Sciatic nerve (tissue), 2 donors: ENCODE measurements at regions of chr11 and their contacts with region 1.

Region 1: DNA sequence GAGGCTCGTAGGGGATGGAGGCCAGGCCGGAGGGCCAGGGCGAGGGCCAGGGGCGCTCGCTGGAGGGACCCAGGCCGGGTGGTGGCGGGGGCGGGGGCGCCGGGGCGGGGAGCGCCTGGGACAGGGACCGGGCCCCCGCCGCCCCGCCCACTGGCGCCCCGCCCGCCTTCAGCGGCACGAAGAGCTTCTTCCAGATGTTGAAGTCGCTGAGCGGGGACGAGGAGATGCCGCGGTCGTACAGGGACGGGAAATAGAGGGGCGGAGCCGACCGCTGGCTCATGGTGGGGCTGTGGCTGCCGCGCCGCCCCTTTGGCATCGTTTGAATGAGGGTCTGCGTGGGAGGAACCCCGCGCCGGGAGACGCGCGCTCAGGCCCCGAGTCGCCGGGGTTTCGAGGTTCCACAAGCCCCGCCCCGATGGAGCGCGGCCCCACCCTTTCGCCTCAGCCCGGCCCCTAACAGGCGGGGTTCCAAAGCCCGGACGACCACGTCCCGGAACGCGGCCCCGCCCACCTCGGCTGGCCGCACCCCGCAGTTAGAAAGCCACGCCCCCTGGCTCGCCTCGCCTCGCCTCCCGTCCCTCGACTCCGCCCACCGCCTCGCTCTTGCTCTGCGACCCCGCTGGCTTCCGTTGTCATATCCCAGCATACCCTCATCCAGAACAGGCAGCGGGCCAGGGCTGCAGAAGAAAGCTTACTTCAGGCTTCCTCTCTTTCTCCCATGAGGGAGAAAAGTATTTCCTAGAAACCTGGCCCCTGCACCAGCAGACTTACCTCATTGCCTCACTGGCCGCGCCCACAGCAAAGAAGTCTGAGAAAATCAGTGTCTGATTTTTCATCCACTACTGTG is at the start of gene C11orf91:
- DNase-seq: peak; percentile 99
- ATAC-seq: peak; percentile 95
- total RNA-seq, gene C11orf91: not detected

Region 2: GRCh38 chr11:33736148-33736809 is 35.6 kb after region 1 on chr11 and contains the start of gene CD59:
- intact Hi-C with region 1: loop called (anchors 5 kb)
- DNase-seq: peak; percentile 99
- ATAC-seq: peak; percentile 98
- total RNA-seq, gene CD59: 679 TPM

Region 3: DNA sequence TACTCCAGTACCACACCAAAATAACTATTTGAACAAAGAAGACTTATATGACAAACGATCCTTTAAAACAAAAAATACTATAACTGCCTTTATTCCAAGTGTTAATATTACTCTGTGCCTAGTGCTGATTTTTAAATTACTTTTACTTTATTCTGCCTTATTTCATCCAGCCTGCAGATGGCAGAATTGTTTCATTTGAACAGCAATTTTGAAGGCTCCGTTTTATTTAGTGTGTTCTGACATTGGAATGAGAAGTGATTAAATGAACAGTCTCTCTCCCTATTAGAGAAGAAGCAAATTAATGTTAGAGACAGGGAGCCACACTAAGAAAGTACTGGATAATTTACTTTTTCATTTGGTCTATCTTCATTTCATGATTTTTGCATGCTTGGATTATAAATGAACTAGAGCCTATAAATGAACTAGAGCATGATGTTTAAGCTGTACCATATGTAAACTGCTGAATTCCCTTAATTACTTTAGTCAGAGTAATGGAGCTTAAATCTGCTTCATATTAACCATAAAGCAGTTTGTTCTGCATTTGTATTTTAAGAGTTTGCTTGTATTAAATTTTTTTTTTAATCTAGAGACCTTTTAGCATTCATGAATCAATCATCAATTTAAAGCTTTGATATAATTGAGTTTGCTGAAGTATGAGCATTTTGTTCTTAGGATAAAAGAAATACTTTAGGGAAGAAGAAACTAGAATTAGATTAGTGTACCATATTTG is 1225.6 kb after region 1 on chr11:
- intact Hi-C with region 1: loop called (anchors 5 kb)
- DNase-seq: no peak
- ATAC-seq: peak; percentile 65